ENCODE measurements at regions of chr1 and their contacts with region 1.

Region 1: GRCh38 chr1:222465211-222466041 is 82.5 kb downstream of the HHIPL2 start:
- DNase-seq: peak; percentile 86 to 91
- H3K4me3 ChIP-seq: peak overlapping the region; percentile 30
- H3K4me1 ChIP-seq: peaks cover 3% of the 10 kb centered on the region; the same call in 1 of the 2 replicates
- H3K27me3 ChIP-seq: no peaks in the 10 kb centered on the region

Region 2: GRCh38 chr1:222392556-222392955 is 72.9 kb before region 1 on chr1:
- in situ Hi-C with region 1: no loop called
- DNase-seq: no peak
- H3K4me3 ChIP-seq: no peak overlapping the region
- H3K4me1 ChIP-seq: no peaks in the 10 kb centered on the region
- H3K27me3 ChIP-seq: no peaks in the 10 kb centered on the region

Region 3: GRCh38 chr1:222634180-222635013 is 169.0 kb after region 1 on chr1:
- in situ Hi-C with region 1: loop called (anchors 10 kb)
- DNase-seq: peak; percentile 67 to 81
- H3K4me3 ChIP-seq: no peak overlapping the region
- H3K4me1 ChIP-seq: no peaks in the 10 kb centered on the region
- H3K27me3 ChIP-seq: no peaks in the 10 kb centered on the region

Region 4: GRCh38 chr1:223081181-223081994 is 616.0 kb after region 1 on chr1:
- in situ Hi-C with region 1: loop called (anchors 10 kb)
- DNase-seq: peak; percentile 86 to 93
- H3K4me3 ChIP-seq: no peak overlapping the region
- H3K4me1 ChIP-seq: peaks cover 2% of the 10 kb centered on the region; the same call in 1 of the 2 replicates
- H3K27me3 ChIP-seq: no peaks in the 10 kb centered on the region